HepG2 (cell line): ENCODE measurements at regions of chr2 and their contacts with region 1.

Region 1: GRCh38 chr2:187574969-187575750 is 20.9 kb upstream of the TFPI start:
- DNase-seq: no peak
- ATAC-seq: no peak
- H3K4me3 ChIP-seq: no peak overlapping the region
- H3K27ac ChIP-seq: no peak overlapping the region
- H3K4me1 ChIP-seq: peaks cover 35% of the 10 kb centered on the region
- H3K27me3 ChIP-seq: no peaks in the 10 kb centered on the region
- CTCF ChIP-seq: no peak
- EP300 ChIP-seq: no peak
- POLR2A ChIP-seq: no peak
- RAD21 ChIP-seq: no peak

Region 2: GRCh38 chr2:187499941-187500532 is 75.1 kb before region 1 on chr2:
- CTCF ChIA-PET with region 1: interaction called, 258 read pairs
- POLR2A ChIA-PET with region 1: no interaction called
- in situ Hi-C with region 1: loop called (anchors 5 kb)
- intact Hi-C with region 1: loop called (anchors 1 kb)
- DNase-seq: peak; percentile 66
- ATAC-seq: peak; percentile 72
- H3K4me3 ChIP-seq: no peak overlapping the region
- H3K27ac ChIP-seq: peak overlapping the region; percentile 45
- H3K4me1 ChIP-seq: peaks cover 44% of the 10 kb centered on the region
- H3K27me3 ChIP-seq: no peaks in the 10 kb centered on the region
- CTCF ChIP-seq: peak; percentile 81
- EP300 ChIP-seq: no peak
- POLR2A ChIP-seq: no peak
- RAD21 ChIP-seq: peak; percentile 91